Right ventricle myocardium inferior (tissue), 1 donor: ENCODE measurements at regions of chr18 and their contacts with region 1.

Region 1: DNA sequence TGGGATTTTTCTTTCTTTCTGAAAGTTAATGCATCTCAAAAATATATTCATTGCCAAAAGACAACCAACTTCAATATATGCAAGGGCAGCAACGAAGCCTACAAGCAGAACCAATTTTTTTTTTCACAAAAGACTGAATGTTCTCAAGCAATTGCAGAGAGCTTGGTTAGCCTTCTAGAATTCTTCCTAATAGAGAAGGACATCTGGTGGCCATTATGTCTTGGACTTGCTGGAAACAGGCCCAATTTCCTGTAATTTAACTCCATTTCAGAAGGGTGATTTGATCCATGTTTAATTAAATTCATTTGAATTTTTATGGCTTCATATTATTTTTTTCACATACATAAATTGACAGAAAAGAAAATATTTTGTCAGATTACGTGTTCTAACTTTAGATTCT is 208.0 kb downstream of the TPGS2 start:
- DNase-seq: no peak
- ATAC-seq: no peak

Region 2: DNA sequence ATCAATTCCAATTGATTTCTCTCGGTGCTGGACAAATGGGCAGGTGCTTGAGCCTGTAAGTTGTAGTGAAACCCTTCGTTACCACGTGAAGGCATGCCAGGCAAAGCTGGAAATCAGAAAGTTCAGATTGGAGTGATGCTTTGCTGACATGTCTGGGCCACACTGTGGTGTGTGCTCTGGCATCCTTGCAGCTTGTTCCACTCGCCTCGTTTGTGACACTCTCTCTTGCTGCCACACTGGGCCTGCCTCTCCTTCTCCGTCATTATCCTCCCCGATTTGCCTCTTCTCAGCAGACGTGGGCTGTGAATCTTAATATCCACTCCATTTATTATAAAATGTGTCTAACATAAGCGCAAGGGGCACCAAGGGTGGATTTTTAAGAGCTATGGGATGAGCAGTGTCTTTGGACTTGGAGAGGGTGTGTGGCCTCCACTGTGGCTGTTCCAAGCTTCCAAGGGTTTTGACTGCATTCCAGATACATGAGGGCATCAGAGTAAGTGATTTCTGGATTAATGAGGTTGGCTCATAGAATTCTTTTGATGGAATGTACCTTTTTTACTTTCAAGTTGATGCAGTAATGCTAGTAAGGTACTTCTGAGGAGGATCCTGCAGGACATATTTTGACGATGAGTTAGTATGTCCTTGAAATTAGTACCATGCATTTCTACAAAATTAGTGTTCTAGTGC is 30.8 kb before region 1 on chr18:
- intact Hi-C with region 1: loop called (anchors 5 kb)
- DNase-seq: no peak
- ATAC-seq: no peak